Ascending aorta (tissue), 2 donors: ENCODE measurements at regions of chr12 and their contacts with region 1.

Region 1: DNA sequence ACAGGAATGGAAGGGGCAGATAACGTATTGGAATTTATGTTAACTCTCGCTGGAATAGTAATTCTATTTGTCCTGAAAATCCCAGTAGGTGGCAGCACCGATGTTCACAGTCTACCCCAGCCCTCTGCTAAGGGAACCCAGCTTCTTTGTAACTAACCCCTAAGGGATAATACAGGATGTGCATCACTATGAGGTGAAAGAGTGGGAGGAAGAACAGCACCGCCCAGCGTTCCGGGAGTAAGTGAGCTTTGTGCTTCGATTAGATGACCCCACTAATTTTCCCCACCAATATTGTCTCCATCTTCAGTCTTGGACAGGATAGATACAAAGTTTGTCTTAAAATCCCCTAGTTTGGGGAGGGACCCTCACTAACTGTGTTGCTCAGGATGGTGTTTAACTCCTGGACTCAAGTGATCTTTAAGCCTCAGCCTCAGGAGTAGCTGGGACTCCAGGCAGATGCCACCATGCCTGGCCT is 2.7 kb downstream of the SLC2A3 start:
- DNase-seq: peak in 1 of 2 donors; percentile 90
- H3K4me3 ChIP-seq: peak overlapping the region; percentile 55 to 71
- H3K27ac ChIP-seq: peak overlapping the region; percentile 66 to 80
- H3K4me1 ChIP-seq: peaks cover 4 to 5% of the 10 kb centered on the region in 2 donors
- H3K27me3 ChIP-seq: no peaks in the 10 kb centered on the region
- CTCF ChIP-seq: peak; percentile 50 to 68 (median 66)

Region 2: DNA sequence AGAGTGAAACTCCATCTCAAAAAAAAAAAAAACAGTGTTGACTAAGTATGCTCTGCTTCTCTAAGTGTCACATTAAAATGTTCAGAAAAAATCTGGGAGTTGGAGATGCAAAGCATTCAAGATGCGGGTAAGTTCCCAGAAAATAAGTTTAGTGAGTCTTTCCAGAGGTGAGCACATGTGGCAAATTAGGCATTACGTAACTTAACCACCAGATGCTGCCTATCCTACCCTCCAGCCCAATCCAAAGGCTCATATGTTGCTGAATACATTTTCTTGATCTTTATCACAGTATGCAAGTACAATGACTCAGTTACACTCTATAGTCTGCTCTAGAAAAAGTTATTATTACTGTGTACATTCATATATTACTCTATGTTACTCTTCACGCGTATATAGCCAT is 64.2 kb before region 1 on chr12:
- intact Hi-C with region 1: loop called (anchors 10 kb)
- DNase-seq: no peak
- H3K4me3 ChIP-seq: no peak overlapping the region
- H3K27ac ChIP-seq: no peak overlapping the region
- H3K4me1 ChIP-seq: no peaks in the 10 kb centered on the region
- H3K27me3 ChIP-seq: peaks cover 10% of the 10 kb centered on the region
- CTCF ChIP-seq: no peak

Region 3: GRCh38 chr12:7959701-7960121 is 26.4 kb after region 1 on chr12:
- intact Hi-C with region 1: loop called (anchors 1 kb)
- DNase-seq: no peak
- H3K4me3 ChIP-seq: no peak overlapping the region
- H3K27ac ChIP-seq: no peak overlapping the region
- H3K4me1 ChIP-seq: no peaks in the 10 kb centered on the region
- H3K27me3 ChIP-seq: no peaks in the 10 kb centered on the region
- CTCF ChIP-seq: no peak

Region 4: DNA sequence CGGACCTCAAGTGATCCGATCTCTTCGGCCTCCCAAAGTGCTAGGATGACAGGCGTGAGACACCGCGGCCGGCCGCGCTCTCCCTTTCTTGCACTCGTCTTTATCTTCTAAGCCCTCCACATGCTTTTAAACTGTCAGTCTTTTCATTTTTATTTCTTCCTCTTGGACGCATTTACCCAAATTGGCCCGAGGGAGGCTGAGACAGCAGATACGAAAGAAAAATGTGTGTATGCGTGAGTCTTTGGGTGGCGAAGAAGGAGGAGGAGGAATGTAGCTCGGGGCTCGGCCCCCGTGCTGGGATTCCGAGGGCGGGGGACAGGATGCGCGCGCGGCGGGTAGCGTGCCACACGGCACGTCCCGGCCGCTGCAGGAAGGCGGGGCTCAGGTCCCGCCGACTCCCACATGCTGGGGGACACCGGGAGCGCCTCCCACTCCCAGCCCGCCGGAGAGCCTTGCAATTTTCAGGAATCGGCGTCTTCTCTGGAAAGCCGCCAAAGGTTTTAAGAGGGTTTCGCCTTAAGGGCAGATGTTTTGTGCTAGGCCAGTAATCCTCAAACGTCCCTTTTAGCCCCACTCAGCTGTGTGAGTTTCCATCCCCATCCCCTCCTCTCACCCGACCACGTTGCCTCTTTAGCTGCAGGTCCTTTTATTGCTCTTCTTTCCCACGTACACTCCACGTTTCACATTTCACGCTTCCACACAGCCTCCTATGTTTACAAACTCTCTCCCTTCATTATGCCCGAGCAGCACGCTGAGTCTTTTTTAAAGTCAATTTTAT is 37.4 kb after region 1 on chr12:
- intact Hi-C with region 1: loop called (anchors 2 kb)
- DNase-seq: peak; percentile 52 to 94
- H3K4me3 ChIP-seq: peak overlapping the region; percentile 56 to 72
- H3K27ac ChIP-seq: peak overlapping the region; percentile 64 to 82
- H3K4me1 ChIP-seq: peaks cover 0 to 7% of the 10 kb centered on the region in 2 donors
- H3K27me3 ChIP-seq: no peaks in the 10 kb centered on the region
- CTCF ChIP-seq: no peak

Region 5: DNA sequence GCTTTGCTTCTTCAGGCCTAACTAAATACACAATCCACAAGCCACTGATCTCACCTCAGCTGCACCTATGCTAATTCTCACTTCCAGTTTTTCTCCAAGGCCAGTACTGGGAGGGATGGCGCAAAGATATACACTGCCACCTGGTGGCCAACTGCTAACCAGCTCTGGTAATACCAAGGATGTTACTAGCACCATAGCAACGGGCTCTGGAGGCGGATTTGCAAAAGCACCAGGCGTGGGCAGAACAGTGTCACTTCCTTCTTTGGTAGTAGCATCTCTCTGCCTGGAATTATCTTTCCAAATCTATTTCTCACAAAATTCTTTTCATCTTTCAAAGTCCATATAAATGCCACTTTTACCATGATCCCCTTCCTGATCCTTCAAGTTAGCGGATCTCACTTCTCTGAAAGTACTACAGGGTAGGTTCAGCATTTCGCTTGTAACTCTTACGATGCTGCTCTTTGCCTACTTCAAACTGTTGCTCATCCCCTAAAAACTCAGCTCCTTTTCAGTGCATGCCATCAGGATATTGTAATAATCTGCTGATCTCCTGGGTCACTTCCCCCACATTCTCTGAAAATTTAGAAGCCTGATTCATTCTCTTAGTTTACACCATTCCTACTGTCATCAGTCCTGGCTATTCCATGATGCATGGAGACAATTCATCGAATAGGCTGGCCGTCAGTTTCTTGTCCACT is 62.1 kb after region 1 on chr12:
- intact Hi-C with region 1: loop called (anchors 1 kb)
- DNase-seq: peak; percentile 60 to 89
- H3K4me3 ChIP-seq: no peak overlapping the region
- H3K27ac ChIP-seq: no peak overlapping the region
- H3K4me1 ChIP-seq: no peaks in the 10 kb centered on the region
- H3K27me3 ChIP-seq: no peaks in the 10 kb centered on the region
- CTCF ChIP-seq: peak; percentile 62 to 84 (median 74)

Region 6: GRCh38 chr12:8081251-8081920 is 148.1 kb after region 1 on chr12:
- intact Hi-C with region 1: loop called (anchors 5 kb)
- DNase-seq: no peak
- H3K4me3 ChIP-seq: peak overlapping the region; percentile 68 to 75
- H3K27ac ChIP-seq: peak overlapping the region; percentile 77 to 92
- H3K4me1 ChIP-seq: peaks cover 0 to 24% of the 10 kb centered on the region in 2 donors
- H3K27me3 ChIP-seq: no peaks in the 10 kb centered on the region
- CTCF ChIP-seq: no peak